Activated CD8-positive, alpha-beta T cell treated with anti-CD3 and anti-CD28 coated beads for 36 hours (primary cell): ENCODE measurements at regions of chr10 and their contacts with region 1.

Region 1: DNA sequence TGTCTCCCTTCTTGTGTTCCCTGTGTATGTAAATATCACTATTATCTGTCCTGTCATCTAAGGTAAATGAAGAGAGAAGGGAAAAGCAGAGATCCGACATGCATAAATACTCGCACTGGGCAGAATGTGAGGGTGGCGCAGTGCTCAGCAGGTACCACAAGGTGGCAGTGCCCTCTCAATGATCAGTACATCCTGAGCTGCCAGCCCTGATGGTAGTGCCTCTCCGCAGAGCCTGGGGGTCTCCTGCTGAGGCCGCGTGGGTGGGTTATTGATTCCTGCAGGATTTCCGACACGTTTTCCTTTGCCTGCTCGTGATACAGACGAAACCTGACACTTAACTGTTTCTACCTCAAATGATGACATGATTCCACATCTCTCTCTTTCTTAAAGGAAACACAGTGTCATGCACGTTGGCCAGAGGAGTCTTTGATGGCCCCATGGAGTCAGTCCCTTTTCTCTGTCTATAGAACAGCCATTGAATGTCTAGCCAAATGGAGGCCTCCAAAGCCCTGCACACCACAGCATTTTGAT is 19.8 kb downstream of the RGR start:
- DNase-seq: peak; percentile 85
- ATAC-seq: peak; percentile 94
- H3K4me3 Mint-ChIP-seq: no peak overlapping the region
- H3K27ac Mint-ChIP-seq: no peak overlapping the region
- H3K4me1 Mint-ChIP-seq: peaks cover 15% of the 10 kb centered on the region
- H3K27me3 Mint-ChIP-seq: peaks cover 24% of the 10 kb centered on the region
- CTCF ChIP-seq: peak; percentile 97

Region 2: GRCh38 chr10:84152769-84153168 is 111.9 kb before region 1 on chr10:
- CTCF ChIA-PET with region 1: no interaction called
- POLR2A ChIA-PET with region 1: no interaction called
- intact Hi-C with region 1: no loop called
- DNase-seq: no peak
- ATAC-seq: no peak
- H3K4me3 Mint-ChIP-seq: no peak overlapping the region
- H3K27ac Mint-ChIP-seq: peak overlapping the region; percentile 60
- H3K4me1 Mint-ChIP-seq: peaks cover 40% of the 10 kb centered on the region
- H3K27me3 Mint-ChIP-seq: no peaks in the 10 kb centered on the region
- CTCF ChIP-seq: no peak

Region 3: GRCh38 chr10:84224411-84225028 is 40.2 kb before region 1 on chr10:
- CTCF ChIA-PET with region 1: no interaction called
- POLR2A ChIA-PET with region 1: no interaction called
- intact Hi-C with region 1: no loop called
- DNase-seq: peak; percentile 15
- ATAC-seq: no peak
- H3K4me3 Mint-ChIP-seq: no peak overlapping the region
- H3K27ac Mint-ChIP-seq: no peak overlapping the region
- H3K4me1 Mint-ChIP-seq: no peaks in the 10 kb centered on the region
- H3K27me3 Mint-ChIP-seq: peaks cover 17% of the 10 kb centered on the region
- CTCF ChIP-seq: no peak

Region 4: GRCh38 chr10:84328418-84329195 is 63.9 kb after region 1 on chr10 and contains the start of gene CCSER2:
- CTCF ChIA-PET with region 1: interaction called, 19 read pairs
- POLR2A ChIA-PET with region 1: interaction called, 3 read pairs
- intact Hi-C with region 1: loop called (anchors 5 kb)
- DNase-seq: peak; percentile 99
- ATAC-seq: peak; percentile 80
- H3K4me3 Mint-ChIP-seq: peak within 1 kb of the TSS; percentile 89
- H3K27ac Mint-ChIP-seq: peak within 1 kb of the TSS; percentile 94
- H3K4me1 Mint-ChIP-seq: peaks cover 20% of the 10 kb centered on the region
- H3K27me3 Mint-ChIP-seq: no peaks in the 10 kb centered on the region
- CTCF ChIP-seq: no peak
- total RNA-seq, gene CCSER2: 56.9 to 57.5 TPM

Region 5: DNA sequence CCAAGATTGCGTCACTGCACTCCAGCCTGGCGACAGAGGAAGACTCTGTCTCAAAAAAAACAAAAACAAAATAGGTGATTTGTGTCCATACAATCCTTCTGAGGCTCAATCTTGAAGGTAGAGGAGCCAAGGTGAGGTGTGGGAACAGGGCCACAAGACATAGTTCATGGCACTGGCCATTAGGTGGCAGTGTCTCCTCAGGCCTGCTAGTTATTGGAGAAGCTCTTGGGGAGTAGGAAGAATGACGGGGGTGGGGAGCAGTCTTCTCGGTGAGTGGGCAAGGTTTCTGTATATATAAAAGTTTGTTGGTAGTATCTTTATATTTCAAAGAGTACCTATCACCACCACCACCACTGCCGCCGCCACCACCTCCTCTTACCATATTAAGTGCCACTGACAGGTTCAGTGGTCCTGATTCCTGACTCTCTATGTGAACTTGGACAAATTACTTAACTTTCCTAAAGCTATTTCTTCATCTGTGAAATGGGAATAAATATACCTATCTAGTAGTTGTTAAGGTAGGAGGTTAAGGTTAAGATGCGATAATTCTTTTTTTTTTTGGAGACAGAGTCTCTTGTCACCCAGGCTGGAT is 87.7 kb after region 1 on chr10:
- CTCF ChIA-PET with region 1: interaction called, 24 read pairs
- POLR2A ChIA-PET with region 1: no interaction called
- intact Hi-C with region 1: no loop called
- DNase-seq: peak; percentile 82
- ATAC-seq: peak; percentile 88
- H3K4me3 Mint-ChIP-seq: no peak overlapping the region
- H3K27ac Mint-ChIP-seq: peak overlapping the region; percentile 31
- H3K4me1 Mint-ChIP-seq: peaks cover 67% of the 10 kb centered on the region
- H3K27me3 Mint-ChIP-seq: no peaks in the 10 kb centered on the region
- CTCF ChIP-seq: peak; percentile 85

Region 6: GRCh38 chr10:84375011-84375410 is 110.3 kb after region 1 on chr10:
- CTCF ChIA-PET with region 1: interaction called, 23 read pairs
- POLR2A ChIA-PET with region 1: no interaction called
- intact Hi-C with region 1: loop called (anchors 2 kb)
- DNase-seq: peak; percentile 61
- ATAC-seq: peak; percentile 62
- H3K4me3 Mint-ChIP-seq: no peak overlapping the region
- H3K27ac Mint-ChIP-seq: no peak overlapping the region
- H3K4me1 Mint-ChIP-seq: peaks cover 43% of the 10 kb centered on the region
- H3K27me3 Mint-ChIP-seq: no peaks in the 10 kb centered on the region
- CTCF ChIP-seq: peak; percentile 85